IMR-90 (cell line): ENCODE measurements at regions of chr12 and their contacts with region 1.

Region 1: DNA sequence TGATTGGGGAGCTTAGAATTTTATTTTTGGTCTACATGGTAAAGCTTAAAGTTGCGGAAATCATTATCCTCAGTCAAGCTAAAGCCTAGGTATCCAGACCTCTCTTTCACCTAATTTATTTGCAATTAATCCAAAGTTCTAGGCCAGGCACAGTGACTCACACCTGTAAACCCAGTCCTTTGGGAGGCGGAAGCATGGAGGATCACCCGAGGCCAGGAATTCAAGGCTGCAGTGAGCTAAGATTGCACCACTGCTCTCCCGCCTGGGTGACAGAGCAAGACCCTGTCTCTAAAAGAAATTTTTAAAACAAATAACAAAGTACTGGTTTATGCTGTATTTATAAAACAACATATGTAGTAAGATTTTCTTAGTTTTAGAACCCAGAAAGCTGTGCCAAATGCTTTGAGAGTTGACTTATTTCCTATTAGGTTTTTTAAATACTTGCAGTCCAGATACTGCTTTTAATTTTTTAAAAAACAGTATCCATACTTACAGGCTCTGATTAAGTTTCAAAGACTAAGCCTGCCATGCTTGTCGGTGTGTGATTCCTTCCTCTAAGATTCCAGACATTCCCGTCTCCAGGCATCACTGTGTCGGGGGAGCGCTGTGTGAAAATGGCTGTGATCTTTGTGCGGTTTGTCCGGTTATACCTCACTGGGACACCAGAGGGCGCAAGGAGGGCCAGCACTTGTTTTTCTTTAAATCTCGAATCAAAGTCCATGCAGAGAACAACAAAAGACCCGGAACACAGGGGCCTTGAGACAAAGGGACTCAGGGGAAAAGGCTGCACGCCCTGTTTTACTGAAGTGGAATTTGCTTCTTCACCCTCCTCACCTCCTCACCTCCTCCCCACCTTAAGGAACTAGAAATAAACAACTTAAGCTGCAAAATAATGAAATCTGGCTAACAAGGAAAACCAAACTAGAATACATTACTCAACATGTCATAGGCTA is 24.6 kb upstream of the TMPO start:
- DNase-seq: peak; percentile 90
- ATAC-seq: peak; percentile 100
- H3K4me3 ChIP-seq: no peak overlapping the region
- H3K27ac ChIP-seq: peak overlapping the region; percentile 87
- H3K4me1 ChIP-seq: no peaks in the 10 kb centered on the region
- H3K27me3 ChIP-seq: no peaks in the 10 kb centered on the region
- CTCF ChIP-seq: peak; percentile 93
- POLR2A ChIP-seq: no peak
- RAD21 ChIP-seq: peak; percentile 68

Region 2: GRCh38 chr12:98424726-98425401 is 65.9 kb before region 1 on chr12:
- CTCF ChIA-PET with region 1: interaction called, 3 read pairs
- POLR2A ChIA-PET with region 1: no interaction called
- dilution Hi-C with region 1: no loop called
- in situ Hi-C with region 1: no loop called
- intact Hi-C with region 1: loop called (anchors 2 kb)
- DNase-seq: peak; percentile 73
- ATAC-seq: peak; percentile 94
- H3K4me3 ChIP-seq: no peak overlapping the region
- H3K27ac ChIP-seq: no peak overlapping the region
- H3K4me1 ChIP-seq: peaks cover 2% of the 10 kb centered on the region; the same call in 1 of the 2 replicates
- H3K27me3 ChIP-seq: no peaks in the 10 kb centered on the region; the same call in 1 of the 2 replicates
- CTCF ChIP-seq: peak; percentile 75
- POLR2A ChIP-seq: no peak
- RAD21 ChIP-seq: peak; percentile 63

Region 3: DNA sequence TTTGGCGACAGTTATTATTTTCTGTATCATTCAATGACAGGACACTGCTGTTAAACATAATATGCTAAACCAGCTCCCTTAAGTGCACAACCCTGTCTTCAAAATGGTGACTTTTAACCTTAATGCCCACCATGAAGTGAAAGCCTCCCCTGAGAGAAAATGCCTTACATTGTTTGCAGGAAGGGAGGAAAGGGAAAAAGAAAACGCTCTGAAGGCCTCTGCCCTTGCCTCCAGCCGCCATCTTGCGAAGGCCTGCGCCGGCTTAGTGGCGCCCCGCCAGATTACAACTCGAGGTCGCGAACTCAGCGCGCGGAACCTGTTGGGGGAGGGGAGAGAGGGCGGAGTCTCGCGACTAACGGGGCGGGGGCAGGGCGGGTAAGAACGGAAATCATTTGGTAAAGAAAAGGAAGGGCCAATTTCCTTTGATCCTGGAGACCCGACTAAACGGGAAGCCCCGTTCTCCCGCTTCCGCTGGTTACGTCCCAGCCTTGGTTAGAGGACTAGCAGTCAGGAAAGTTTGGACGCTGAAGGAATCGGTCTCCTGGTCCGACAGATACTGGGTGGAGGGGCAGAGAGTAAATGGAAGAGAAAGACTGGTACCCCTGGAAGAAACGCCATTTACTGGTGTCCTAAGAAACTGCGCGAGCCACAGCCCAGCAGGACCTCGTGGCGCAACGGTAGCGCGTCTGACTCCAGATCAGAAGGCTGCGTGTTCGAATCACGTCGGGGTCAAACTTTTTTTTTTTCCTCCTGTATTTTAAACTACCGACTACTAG is 13.0 kb after region 1 on chr12:
- CTCF ChIA-PET with region 1: interaction called, 7 read pairs
- POLR2A ChIA-PET with region 1: no interaction called
- dilution Hi-C with region 1: no loop called
- in situ Hi-C with region 1: no loop called
- intact Hi-C with region 1: loop called (anchors 1 kb)
- DNase-seq: peak; percentile 89
- ATAC-seq: peak; percentile 90
- H3K4me3 ChIP-seq: peak overlapping the region; percentile 72
- H3K27ac ChIP-seq: peak overlapping the region; percentile 93
- H3K4me1 ChIP-seq: no peaks in the 10 kb centered on the region
- H3K27me3 ChIP-seq: no peaks in the 10 kb centered on the region
- CTCF ChIP-seq: no peak
- POLR2A ChIP-seq: no peak
- RAD21 ChIP-seq: no peak